Spleen (tissue), 13 donors: ENCODE measurements at regions of chr11 and their contacts with region 1.

Region 1: DNA sequence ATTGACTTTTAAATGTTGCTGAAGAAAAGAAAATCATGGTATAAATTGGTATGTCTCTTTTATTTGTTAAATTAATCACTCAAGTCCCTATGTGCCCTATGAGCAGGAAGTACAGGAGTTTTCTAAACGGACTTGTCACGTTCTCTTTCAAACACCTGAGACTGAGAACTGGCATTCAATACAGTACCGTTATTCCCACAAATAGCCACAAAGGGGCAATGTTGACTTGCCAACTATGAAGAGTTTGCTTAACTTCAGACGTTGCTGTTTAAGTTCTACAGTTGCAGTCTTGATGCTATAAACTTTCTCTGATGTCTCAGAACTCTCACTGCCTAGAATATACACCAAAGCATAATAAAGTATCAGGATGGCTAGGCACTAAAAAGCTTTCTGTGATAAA is 7.6 kb downstream of the OR56A1 start:
- DNase-seq: no peak
- H3K4me3 ChIP-seq: no peak overlapping the region
- H3K27ac ChIP-seq: no peak overlapping the region
- H3K4me1 ChIP-seq: no peaks in the 10 kb centered on the region
- H3K27me3 ChIP-seq: peaks cover 0 to 16% (median 0%) of the 10 kb centered on the region in 7 donors
- CTCF ChIP-seq: peak; percentile 30 to 68 (median 39)
- POLR2A ChIP-seq: no peak

Region 2: GRCh38 chr11:6111673-6112072 is 88.7 kb after region 1 on chr11:
- intact Hi-C with region 1: no loop called
- DNase-seq: no peak
- H3K4me3 ChIP-seq: no peak overlapping the region
- H3K27ac ChIP-seq: no peak overlapping the region
- H3K4me1 ChIP-seq: peaks cover 0 to 3% (median 0%) of the 10 kb centered on the region in 6 donors
- H3K27me3 ChIP-seq: no peaks in the 10 kb centered on the region
- CTCF ChIP-seq: no peak
- POLR2A ChIP-seq: no peak

Region 3: DNA sequence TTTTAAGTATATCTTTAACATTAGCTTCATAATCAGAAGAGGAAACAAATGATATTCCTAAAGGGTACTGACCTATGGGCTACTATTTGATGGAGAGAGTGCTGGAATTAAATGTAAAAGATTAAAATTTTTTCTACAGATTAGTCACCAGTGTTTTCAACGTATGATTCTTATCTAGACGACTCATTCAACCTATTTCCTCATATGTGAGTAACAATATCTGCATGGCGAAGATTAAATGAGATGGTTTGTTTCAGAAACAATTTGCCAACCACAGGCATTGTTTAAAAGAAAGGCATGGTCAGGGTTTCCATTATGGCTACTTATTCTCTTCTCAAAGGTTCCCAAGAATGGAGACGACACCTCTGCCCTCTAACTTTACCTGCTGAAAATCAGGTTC is 104.9 kb after region 1 on chr11:
- intact Hi-C with region 1: no loop called
- DNase-seq: no peak
- H3K4me3 ChIP-seq: no peak overlapping the region
- H3K27ac ChIP-seq: peak overlapping the region in 4 of 8 donors; percentile 82 to 87 (median 84)
- H3K4me1 ChIP-seq: peaks cover 0 to 21% (median 2%) of the 10 kb centered on the region in 6 donors
- H3K27me3 ChIP-seq: no peaks in the 10 kb centered on the region
- CTCF ChIP-seq: no peak
- POLR2A ChIP-seq: no peak

Region 4: GRCh38 chr11:6142936-6143335 is 120.0 kb after region 1 on chr11:
- intact Hi-C with region 1: no loop called
- DNase-seq: no peak
- H3K4me3 ChIP-seq: no peak overlapping the region
- H3K27ac ChIP-seq: no peak overlapping the region
- H3K4me1 ChIP-seq: peaks cover 0 to 6% (median 0%) of the 10 kb centered on the region in 6 donors
- H3K27me3 ChIP-seq: peaks cover 0 to 8% (median 0%) of the 10 kb centered on the region in 7 donors
- CTCF ChIP-seq: no peak
- POLR2A ChIP-seq: no peak

Region 5: DNA sequence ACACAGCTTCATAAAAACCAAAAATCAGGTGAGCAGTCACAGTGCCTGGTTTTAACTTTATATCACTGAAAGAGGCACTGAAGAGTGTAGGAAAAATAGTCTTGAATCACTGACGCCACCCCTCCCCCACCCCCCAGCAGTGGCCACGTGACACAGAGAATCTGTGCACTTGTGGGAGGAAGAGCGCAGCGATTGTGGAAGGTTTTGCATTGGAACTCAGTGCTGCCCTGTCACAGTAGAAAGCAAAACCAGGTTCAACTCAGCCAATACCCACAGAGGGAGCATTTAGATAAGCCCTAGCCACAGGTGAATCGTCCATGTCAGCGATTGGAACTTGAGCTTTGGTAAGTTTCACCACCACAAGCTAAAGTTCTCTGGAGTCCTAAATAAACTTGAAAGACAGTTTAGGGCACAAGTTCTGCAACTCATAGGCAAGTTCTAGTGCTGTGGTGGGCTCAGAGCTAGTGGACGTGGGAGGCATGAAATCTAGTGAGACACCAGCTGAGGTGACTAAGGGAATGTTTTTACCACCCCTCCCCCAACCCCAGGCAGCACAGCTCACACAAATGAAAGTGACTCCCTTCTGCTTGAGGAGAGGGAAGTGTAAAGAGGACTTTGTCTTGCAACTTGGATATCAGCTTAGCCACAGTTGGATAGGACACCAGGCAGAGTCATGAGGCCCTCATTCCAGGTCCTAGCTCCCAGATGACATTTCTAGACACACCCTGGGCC is 133.8 kb after region 1 on chr11:
- intact Hi-C with region 1: no loop called
- DNase-seq: no peak
- H3K4me3 ChIP-seq: no peak overlapping the region
- H3K27ac ChIP-seq: no peak overlapping the region
- H3K4me1 ChIP-seq: no peaks in the 10 kb centered on the region
- H3K27me3 ChIP-seq: no peaks in the 10 kb centered on the region
- CTCF ChIP-seq: no peak
- POLR2A ChIP-seq: no peak

Region 6: GRCh38 chr11:6315811-6316425 is 293.0 kb after region 1 on chr11:
- intact Hi-C with region 1: loop called (anchors 5 kb)
- DNase-seq: peak; percentile 79
- H3K4me3 ChIP-seq: no peak overlapping the region
- H3K27ac ChIP-seq: no peak overlapping the region
- H3K4me1 ChIP-seq: peaks cover 3 to 39% (median 20%) of the 10 kb centered on the region in 6 donors
- H3K27me3 ChIP-seq: peaks cover 0 to 68% (median 19%) of the 10 kb centered on the region in 7 donors
- CTCF ChIP-seq: peak; percentile 41 to 88 (median 70)
- POLR2A ChIP-seq: no peak

Region 7: DNA sequence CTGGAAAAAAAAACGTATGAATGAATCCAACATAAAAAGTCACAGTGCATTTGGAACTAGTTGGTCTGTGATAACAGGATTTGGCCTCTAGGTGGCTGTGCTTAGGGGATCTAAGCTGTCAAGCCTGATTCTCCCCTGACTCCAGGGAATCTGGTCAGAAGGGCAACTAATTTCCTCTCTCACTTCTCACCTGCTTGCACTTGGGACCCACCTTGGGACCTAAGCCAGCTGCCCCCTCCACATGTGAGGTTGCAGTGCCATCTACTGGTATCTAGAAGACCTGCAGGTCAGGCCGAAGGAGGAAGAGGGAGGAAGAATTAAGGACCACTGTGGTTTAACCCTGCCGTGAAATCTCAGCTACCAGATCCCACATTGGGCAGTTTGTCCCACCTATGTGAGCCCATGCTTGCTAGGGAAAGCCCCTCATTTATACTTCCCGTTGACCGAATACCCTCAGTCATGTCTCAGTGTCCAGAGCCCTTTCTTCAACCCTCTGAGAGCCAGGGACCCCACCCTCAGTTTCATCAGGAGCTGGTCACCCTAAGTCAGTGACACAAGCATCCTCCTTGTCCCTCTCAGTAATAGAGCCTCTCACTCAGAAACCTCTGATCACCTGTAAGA is 330.5 kb after region 1 on chr11:
- intact Hi-C with region 1: loop called (anchors 5 kb)
- DNase-seq: no peak
- H3K4me3 ChIP-seq: no peak overlapping the region
- H3K27ac ChIP-seq: no peak overlapping the region
- H3K4me1 ChIP-seq: peaks cover 0 to 6% (median 0%) of the 10 kb centered on the region in 6 donors
- H3K27me3 ChIP-seq: no peaks in the 10 kb centered on the region
- CTCF ChIP-seq: peak; percentile 73 to 95 (median 90)
- POLR2A ChIP-seq: no peak